Heart right ventricle (tissue), 16 donors: ENCODE measurements at regions of chr3 and their contacts with region 1.

Region 1: DNA sequence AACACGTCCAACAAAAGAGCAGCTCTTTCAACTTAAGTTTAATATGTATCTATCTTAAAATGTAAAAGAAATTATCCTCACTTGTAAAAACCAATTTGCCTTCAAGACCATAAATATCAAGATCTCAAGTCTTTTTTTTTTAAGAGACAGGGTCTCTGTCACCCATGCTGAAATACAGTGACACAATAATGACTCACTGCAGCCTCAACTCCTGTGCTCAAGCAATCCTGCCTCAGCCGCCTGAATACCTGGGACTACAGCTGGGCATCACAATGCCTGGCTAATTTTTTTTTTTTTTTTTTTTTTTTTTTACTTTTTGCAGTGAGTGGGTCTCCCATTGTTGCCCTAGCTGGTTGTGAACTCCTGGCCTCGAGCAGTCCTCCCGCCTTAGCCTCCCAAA is 26.0 kb downstream of the ACAP2 start:
- DNase-seq: no peak
- ATAC-seq: no peak
- H3K4me3 ChIP-seq: no peak overlapping the region
- H3K27ac ChIP-seq: no peak overlapping the region
- H3K4me1 ChIP-seq: peaks cover 0 to 13% (median 2%) of the 10 kb centered on the region in 9 donors
- H3K27me3 ChIP-seq: no peaks in the 10 kb centered on the region
- CTCF ChIP-seq: no peak

Region 2: DNA sequence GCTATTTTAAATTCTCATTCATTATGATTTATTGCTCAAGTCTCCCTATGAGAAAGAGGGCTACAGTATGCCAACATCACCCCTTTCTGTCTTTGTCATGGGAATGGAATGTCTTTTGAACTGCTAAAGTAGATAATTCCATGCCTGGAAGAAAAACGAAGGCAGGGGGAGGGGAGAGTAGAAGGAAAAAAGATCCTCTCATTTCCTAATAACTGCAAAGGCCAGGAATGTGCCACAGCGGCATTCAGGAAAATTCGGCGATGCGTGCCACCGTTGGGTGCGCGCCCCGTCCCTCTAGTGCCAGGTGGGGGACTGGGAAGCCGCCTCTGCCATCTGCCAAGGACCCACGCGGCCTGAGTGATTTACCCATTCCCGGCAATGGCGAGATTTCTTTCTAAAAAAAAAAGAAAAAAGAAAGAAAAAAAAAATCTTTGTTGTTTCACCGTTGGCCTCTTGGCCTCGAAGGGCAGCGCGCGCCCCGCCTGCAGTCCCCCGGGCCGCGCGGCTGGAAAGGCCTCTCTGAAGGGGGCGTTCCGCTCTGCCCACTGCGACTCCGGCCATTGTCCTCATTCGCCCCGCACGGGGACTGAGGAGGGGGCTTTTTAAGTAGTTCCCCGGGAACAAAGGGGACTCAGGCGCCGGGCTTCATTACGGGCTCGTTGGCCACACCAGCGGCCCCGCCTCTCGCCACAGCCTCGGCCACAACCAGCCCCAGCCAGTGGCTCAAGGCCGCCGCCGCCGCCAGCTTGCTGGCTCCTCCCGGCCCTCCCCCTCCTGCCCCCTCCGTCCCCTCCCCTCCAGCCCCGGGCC is 1120.1 kb before region 1 on chr3:
- intact Hi-C with region 1: no loop called
- DNase-seq: no peak
- ATAC-seq: peak; percentile 9 to 58 (median 36)
- H3K4me3 ChIP-seq: peak overlapping the region in 9 of 10 donors; percentile 9 to 51 (median 37)
- H3K27ac ChIP-seq: peak overlapping the region in 2 of 10 donors; percentile 41 to 61
- H3K4me1 ChIP-seq: peaks cover 0 to 26% (median 8%) of the 10 kb centered on the region in 9 donors
- H3K27me3 ChIP-seq: peaks cover 0 to 24% (median 10%) of the 10 kb centered on the region in 7 donors
- CTCF ChIP-seq: no peak

Region 3: GRCh38 chr3:195302431-195302830 is 114.4 kb before region 1 on chr3:
- intact Hi-C with region 1: no loop called
- DNase-seq: no peak
- ATAC-seq: no peak
- H3K4me3 ChIP-seq: no peak overlapping the region
- H3K27ac ChIP-seq: no peak overlapping the region
- H3K4me1 ChIP-seq: no peaks in the 10 kb centered on the region
- H3K27me3 ChIP-seq: no peaks in the 10 kb centered on the region
- CTCF ChIP-seq: no peak

Region 4: DNA sequence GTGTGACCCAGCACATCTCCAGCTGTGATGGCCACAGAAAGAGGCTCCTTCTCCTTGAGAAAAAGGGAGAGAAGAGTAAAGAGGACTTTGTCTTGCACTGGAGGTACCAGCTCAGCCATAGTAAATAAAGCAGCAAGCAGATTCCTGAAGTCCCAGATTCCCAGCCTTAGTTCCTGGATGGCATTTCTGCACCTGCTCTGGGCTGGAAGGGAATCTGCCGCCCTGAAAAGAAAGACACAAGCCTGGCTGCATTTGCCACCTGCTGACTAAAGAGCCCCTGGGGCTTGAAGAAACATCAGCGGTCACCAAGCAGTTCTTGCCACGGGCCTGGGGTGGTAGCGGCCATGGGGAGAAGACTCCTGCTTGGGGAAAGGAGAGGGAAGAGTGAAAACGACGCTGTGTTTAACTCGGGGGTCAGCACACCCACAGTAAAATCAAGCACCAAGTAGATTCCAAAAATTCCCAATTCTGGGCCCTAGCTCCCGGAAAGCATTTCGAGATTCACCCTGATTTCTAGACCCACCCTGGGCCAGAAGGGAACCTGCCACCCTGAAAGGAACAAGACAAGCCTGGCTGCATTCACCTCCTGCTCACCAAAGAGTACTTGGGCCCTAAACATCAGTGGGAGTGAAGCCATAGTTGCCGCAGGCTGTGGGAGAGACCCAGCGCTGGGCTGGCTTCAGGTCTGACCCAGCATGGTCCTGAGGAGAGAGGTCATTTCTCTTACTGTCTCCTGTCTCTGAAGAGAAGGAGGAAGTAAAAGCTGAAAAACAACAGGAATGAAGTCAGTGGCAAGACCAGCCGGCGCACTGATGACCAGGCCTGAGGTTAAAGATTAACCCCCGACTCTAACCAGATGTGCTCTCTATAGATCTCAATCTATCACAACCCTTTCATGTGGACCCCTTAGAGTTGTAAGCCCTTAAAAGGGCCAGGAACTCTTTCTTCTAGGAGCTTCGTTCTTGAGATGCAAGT is 515.9 kb after region 1 on chr3:
- intact Hi-C with region 1: loop called in 1 of 10 experiments (anchors 5 kb)
- DNase-seq: no peak
- ATAC-seq: no peak
- H3K4me3 ChIP-seq: no peak overlapping the region
- H3K27ac ChIP-seq: no peak overlapping the region
- H3K4me1 ChIP-seq: no peaks in the 10 kb centered on the region
- H3K27me3 ChIP-seq: no peaks in the 10 kb centered on the region
- CTCF ChIP-seq: no peak